Pancreas (tissue), 10 donors: ENCODE measurements at regions of chrX and their contacts with region 1.

Region 1: DNA sequence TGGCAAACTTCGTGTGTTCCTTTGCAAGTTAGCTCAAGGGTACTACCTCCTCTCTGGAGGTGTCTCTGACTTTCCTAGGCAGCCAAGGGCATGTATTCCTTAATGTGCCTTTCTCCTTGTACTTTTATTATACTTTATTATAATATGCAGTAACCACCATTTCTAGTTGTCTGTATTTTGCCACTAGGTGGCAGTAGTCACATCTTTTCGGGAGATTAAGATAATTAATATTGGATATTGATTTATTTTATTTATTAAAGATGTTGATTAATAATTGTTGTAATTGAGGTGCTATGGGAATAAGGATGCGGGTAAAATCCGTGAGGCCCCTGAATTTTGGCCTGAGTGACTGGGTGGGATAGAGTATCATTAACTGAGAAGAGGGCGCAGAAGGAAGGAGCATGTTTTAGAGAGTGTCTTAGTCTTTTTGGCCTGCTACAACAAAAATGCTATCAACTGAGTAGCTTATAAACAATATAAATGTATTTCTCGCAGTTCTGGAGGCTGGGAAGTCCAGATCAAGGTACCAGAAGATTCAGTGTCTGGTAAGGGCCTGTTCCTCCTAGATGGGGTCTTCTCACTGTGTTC is 153.3 kb downstream of the TMEM164 start:
- DNase-seq: no peak
- ATAC-seq: peak in 2 of 4 donors; percentile 19 to 32
- H3K4me3 ChIP-seq: no peak overlapping the region
- H3K27ac ChIP-seq: no peak overlapping the region
- H3K4me1 ChIP-seq: no peaks in the 10 kb centered on the region
- H3K27me3 ChIP-seq: no peaks in the 10 kb centered on the region
- CTCF ChIP-seq: peak; percentile 42 to 64 (median 57)

Region 2: GRCh38 chrX:109770780-109771179 is 385.5 kb before region 1 on chrX:
- intact Hi-C with region 1: no loop called
- DNase-seq: no peak
- ATAC-seq: no peak
- H3K4me3 ChIP-seq: no peak overlapping the region
- H3K27ac ChIP-seq: no peak overlapping the region
- H3K4me1 ChIP-seq: no peaks in the 10 kb centered on the region
- H3K27me3 ChIP-seq: peaks cover 0 to 4% (median 0%) of the 10 kb centered on the region in 4 donors
- CTCF ChIP-seq: no peak

Region 3: GRCh38 chrX:110407910-110408545 is 251.8 kb after region 1 on chrX:
- intact Hi-C with region 1: loop called (anchors 5 to 10 kb)
- DNase-seq: peak in 3 of 6 donors; percentile 14 to 63 (median 46)
- ATAC-seq: peak; percentile 66 to 87 (median 84)
- H3K4me3 ChIP-seq: no peak overlapping the region
- H3K27ac ChIP-seq: no peak overlapping the region
- H3K4me1 ChIP-seq: no peaks in the 10 kb centered on the region
- H3K27me3 ChIP-seq: no peaks in the 10 kb centered on the region
- CTCF ChIP-seq: peak; percentile 68 to 90 (median 76)